ENCODE measurements at regions of chr1 and their contacts with region 1.

Region 1: GRCh38 chr1:93304716-93305138 is 41.0 kb upstream of the DR1 start:
- DNase-seq: peak; percentile 45
- CTCF ChIP-seq: peak; percentile 82

Region 2: GRCh38 chr1:92638498-92638897 is 666.2 kb before region 1 on chr1:
- CTCF ChIA-PET with region 1: no interaction called
- POLR2A ChIA-PET with region 1: no interaction called
- DNase-seq: no peak
- CTCF ChIP-seq: no peak

Region 3: DNA sequence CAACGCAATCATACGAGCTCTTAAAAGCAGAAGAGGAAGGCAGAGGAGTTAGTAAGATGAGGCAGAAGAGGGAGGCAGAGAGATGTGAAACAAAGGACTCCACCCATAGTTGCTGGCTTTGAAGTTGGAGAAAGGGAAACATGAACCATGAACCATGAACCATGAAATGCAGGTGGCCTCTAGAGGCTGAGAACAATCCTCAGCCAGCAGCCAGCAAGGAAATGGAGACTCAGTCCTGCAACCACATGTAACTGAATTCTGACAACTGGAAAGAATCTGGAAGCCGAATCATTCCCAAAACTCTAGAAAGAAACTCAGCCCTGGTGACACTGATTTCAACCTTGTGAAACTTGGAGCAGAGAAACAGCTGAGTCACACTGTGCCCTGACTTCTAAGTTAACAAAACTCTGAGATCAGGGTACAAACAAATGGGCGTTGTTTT is 353.6 kb before region 1 on chr1:
- CTCF ChIA-PET with region 1: no interaction called
- POLR2A ChIA-PET with region 1: no interaction called
- DNase-seq: no peak
- CTCF ChIP-seq: peak; percentile 19

Region 4: DNA sequence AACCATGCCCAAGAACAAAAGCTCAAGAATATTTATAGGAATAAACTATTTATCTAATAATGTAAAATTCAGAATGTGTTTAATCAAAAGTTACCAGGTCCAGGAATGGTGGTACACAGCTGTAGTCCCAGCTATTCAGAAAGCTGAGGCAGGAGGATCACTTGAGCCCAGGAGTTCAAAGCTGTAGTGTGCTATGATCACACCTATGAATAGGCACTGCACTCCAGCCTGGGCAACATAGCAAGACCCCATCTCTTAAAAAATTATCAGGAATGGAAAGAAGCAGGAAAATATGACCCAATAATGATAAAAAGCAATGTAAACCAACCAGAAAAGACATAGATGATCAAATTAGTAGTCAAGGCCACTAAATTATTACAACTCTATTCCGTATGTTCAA is 21.2 kb before region 1 on chr1:
- CTCF ChIA-PET with region 1: interaction called, 15 read pairs
- POLR2A ChIA-PET with region 1: no interaction called
- DNase-seq: no peak
- CTCF ChIP-seq: no peak

Region 5: DNA sequence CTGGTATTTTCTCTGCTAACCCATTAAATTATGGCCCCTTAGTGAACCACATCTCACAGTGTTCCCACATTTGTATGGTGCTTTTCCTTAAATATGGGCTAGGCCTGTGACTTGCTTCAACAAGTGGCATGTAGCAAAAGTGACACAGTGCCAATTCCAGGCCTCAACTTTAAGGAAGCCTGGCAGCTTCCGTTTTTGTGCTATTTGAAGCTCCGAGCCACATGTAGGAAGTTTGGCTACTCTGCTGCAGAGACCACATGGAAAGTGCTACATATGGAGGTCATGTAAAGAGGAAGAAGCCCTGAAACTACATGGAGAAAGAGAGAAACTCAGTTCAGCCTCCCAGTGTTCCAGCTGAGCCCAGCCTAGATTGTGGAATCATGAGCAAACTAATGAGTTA is 12.5 kb after region 1 on chr1:
- CTCF ChIA-PET with region 1: interaction called, 76 read pairs
- POLR2A ChIA-PET with region 1: no interaction called
- DNase-seq: no peak
- CTCF ChIP-seq: no peak

Region 6: DNA sequence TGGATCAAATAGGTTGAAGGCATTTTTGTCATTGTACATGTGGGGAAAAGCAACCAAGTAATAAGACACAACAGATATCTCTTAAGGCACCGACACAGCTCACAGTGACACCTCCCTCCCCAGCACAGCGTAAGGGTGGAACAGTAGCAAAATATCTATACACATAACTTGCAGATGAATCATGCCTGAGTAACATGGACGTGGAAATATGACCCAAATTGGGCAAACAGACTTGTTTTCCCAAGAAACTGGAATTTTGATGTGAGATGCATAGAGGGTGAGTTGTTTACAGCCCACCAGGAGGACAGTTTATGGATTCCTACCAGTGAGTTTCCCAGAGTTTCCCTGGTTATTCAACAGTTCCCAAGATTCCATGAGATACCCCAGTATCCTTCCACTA is 33.7 kb after region 1 on chr1:
- CTCF ChIA-PET with region 1: interaction called, 14 read pairs
- POLR2A ChIA-PET with region 1: interaction called, 3 read pairs
- DNase-seq: no peak
- CTCF ChIP-seq: no peak

Measured in GM10248 (cell line).